ENCODE measurements at regions of chr15 and their contacts with region 1.

Region 1: DNA sequence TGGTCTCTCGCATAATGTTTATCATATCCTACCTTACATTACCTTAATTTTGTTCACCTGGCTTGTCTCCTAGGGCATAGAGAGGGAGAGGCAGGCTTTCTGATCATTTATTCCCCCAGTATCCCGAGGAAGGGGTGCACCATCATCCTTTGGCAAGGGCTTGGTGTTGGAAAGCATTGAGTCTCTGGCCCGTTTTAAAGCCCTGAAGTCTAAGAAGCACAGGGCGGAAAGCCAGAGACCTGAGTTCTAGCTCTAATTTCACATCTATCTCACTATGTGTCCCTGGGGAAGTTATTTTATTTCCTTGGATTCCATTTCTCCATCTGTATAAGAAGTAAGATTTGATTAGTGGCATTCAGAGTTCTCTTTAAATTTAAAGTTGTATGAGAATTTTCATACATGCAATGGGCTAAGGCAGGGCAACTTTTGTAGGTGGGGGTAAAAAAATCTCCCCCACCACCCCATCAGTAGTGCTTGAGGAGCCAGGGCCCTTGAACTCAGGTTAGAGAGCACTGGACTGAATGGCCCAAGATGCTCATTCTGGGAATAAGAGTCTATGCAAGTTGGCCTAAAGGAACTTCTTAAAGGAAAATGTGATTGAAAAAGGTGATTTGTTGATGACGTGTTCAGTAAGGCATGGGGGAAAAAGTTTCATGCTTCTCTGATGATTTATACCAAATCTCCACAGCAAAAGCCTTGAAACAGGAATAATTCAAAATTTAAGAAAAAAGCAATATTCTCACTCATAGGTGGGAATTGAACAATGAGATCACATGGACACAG is 10.1 kb downstream of the TMC3 start:
- DNase-seq: no peak
- ATAC-seq: no peak
- H3K4me3 ChIP-seq: no peak overlapping the region
- H3K27ac ChIP-seq: no peak overlapping the region
- H3K4me1 ChIP-seq: no peaks in the 10 kb centered on the region
- H3K27me3 ChIP-seq: no peaks in the 10 kb centered on the region
- CTCF ChIP-seq: no peak
- POLR2A ChIP-seq: no peak
- RAD21 ChIP-seq: no peak

Region 2: DNA sequence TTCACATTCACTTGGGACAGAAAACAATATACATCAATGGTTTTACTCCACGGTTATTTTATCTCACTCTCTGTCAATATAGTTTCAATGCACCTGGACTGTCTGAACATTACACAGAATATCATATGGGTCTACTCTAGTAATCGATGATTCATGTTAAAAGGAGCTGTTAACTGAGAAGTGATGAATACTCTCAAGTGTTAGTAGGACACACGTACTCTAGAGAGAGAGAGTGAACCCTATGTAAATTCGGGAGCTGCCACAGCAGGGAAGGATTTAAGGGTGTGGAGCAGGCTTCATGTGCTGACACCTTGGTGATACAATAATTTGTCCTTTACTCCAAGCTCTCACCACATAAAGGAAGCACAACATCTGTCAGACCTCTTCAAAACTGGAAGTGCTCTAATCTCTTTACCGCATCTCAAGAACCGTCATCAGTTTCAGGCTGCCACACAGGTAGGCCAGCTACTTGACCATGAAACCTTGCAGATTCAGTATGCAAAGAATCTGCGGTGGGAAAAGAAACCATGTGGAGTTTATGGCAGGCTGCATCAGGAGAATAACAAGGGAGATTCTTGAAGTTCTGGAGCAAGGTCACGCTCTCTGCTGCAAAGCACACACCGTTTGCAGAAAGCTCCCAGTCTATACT is 209.3 kb after region 1 on chr15:
- CTCF ChIA-PET with region 1: no interaction called
- POLR2A ChIA-PET with region 1: no interaction called
- dilution Hi-C with region 1: no loop called
- in situ Hi-C with region 1: no loop called
- intact Hi-C with region 1: loop called (anchors 5 kb)
- DNase-seq: no peak
- ATAC-seq: no peak
- H3K4me3 ChIP-seq: no peak overlapping the region
- H3K27ac ChIP-seq: no peak overlapping the region
- H3K4me1 ChIP-seq: no peaks in the 10 kb centered on the region
- H3K27me3 ChIP-seq: no peaks in the 10 kb centered on the region; the same call in 1 of the 2 replicates
- CTCF ChIP-seq: no peak
- POLR2A ChIP-seq: no peak
- RAD21 ChIP-seq: no peak